Endothelial cell of umbilical vein (primary cell): ENCODE measurements at regions of chr9 and their contacts with region 1.

Region 1: DNA sequence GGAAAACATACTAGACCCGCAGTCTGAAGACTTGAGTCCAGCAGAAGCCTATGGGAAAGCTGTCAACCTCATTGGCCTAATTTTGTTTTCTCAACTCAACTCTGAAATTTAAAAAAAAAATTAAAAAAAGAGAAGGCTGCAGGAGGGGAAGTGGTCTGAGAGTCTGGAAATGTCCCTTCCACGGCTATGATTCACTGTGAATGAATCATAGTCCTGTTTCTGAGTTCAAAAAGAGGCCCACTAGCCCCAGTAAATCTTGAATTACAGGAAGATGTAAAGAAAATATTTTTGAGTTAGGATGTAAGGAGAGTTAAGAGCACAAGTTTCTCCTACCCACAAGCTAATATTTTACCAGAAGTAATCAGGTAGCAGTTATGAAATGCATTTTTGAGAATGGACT is 565.5 kb upstream of the DMAC1 start:
- DNase-seq: peak; percentile 94
- H3K4me3 ChIP-seq: peak overlapping the region in 1 of 3 experiments; percentile 22
- H3K27ac ChIP-seq: peak overlapping the region; percentile 98
- H3K4me1 ChIP-seq: peaks cover 41% of the 10 kb centered on the region
- H3K27me3 ChIP-seq: no peaks in the 10 kb centered on the region
- CTCF ChIP-seq: no peak
- POLR2A ChIP-seq: no peak

Region 2: DNA sequence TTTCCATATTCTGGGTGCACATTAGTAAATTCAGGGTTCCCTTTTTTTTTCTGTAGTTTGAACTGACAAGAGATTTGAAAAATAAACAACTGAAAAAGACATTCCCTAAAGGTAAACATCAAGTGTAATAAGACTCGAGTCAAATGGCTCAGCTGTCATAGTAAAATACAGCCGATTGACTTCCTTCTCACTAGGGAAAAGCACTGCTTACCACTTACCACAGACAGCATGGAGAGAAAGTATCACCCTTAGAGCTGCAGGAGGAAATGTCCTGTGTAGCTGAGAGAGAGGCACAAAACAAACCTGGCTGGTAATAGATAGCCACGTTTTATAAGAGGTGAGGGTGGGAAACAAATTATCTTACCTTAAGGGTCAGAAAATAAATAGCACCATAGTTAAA is 553.4 kb before region 1 on chr9:
- CTCF ChIA-PET with region 1: no interaction called
- POLR2A ChIA-PET with region 1: no interaction called
- dilution Hi-C with region 1: no loop called
- intact Hi-C with region 1: loop called (anchors 10 kb)
- DNase-seq: no peak
- H3K4me3 ChIP-seq: no peak overlapping the region
- H3K27ac ChIP-seq: no peak overlapping the region
- H3K4me1 ChIP-seq: no peaks in the 10 kb centered on the region
- H3K27me3 ChIP-seq: peaks cover 2 to 5% of the 10 kb centered on the region in 2 experiments
- CTCF ChIP-seq: no peak
- POLR2A ChIP-seq: no peak

Region 3: DNA sequence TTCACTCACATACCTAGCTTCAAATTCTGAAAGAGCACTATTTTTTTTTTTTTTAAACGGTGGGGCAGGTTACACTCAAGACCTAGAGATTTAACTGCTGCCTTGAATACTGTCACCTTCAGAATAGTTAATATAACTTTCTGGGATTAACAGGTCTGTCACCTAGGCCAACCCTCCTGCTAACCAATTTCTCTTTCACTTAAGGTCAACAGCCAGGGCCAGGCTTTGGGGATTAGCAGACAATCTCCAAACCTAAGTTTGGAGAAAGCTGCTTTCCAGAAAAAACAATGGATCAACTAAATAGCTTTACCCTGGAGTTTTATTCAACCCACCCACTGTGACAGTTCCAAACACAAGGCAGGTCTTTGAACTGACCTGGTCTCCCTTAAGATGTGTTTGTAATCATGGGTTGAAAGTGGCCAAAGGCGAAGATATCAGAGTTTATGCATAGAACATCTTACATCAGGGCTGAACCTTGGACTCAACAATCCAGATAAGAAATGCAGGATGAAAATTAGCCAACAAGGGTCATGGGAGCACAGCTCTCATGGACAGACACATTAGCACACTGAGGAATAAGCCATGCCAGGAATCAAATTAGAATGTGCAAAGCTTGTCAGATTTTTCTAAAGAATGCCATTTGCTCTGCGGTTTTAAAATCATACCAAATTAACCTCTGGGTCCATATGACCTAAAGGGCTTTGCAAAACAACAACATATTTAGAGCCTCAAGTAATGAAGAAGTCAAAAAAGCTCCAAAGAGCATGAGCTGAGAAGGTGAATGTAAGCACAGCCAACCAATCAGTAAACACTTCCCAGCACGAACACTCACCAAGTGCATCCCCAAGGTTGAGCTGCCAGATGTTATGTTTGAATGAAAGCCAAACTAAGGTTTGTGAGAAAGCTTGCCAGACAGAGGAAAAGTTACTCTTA is 26.9 kb before region 1 on chr9:
- CTCF ChIA-PET with region 1: no interaction called
- POLR2A ChIA-PET with region 1: no interaction called
- dilution Hi-C with region 1: no loop called
- intact Hi-C with region 1: loop called (anchors 1 kb)
- DNase-seq: peak; percentile 82
- H3K4me3 ChIP-seq: no peak overlapping the region
- H3K27ac ChIP-seq: no peak overlapping the region
- H3K4me1 ChIP-seq: peaks cover 14% of the 10 kb centered on the region
- H3K27me3 ChIP-seq: no peaks in the 10 kb centered on the region
- CTCF ChIP-seq: no peak
- POLR2A ChIP-seq: no peak